ENCODE measurements at regions of chr12 and their contacts with region 1.

Region 1: DNA sequence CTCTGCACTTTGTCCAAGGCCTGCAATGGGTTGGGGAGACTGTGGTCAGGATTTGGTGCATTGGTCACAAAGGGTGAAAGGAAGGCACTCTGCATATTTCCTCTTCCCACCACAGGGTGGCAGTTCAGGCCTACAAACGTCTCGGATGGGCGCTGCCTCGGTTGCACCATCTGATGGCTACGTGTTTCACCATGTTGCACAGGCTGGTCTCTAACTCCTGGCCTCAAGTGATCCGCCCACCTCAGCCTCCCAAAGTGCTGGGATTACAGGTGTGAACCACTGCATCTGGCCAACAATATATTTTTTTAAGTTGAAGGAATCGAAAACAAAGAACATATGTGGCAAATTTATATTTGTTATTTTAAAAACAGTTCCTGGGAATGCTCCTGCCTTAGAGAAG is 35.1 kb downstream of the TMBIM6 start:
- DNase-seq: peak; percentile 84
- ATAC-seq: peak; percentile 93
- H3K4me3 Mint-ChIP-seq: no peak overlapping the region
- H3K27ac Mint-ChIP-seq: no peak overlapping the region
- H3K4me1 Mint-ChIP-seq: peaks cover 14% of the 10 kb centered on the region
- H3K27me3 Mint-ChIP-seq: peaks cover 10% of the 10 kb centered on the region

Region 2: GRCh38 chr12:49636979-49637755 is 139.2 kb before region 1 on chr12:
- CTCF ChIA-PET with region 1: interaction called, 22 read pairs
- POLR2A ChIA-PET with region 1: no interaction called
- intact Hi-C with region 1: loop called in 1 of 2 experiments (anchors 1 kb)
- DNase-seq: peak; percentile 78
- ATAC-seq: peak; percentile 97
- H3K4me3 Mint-ChIP-seq: no peak overlapping the region
- H3K27ac Mint-ChIP-seq: peak overlapping the region; percentile 33
- H3K4me1 Mint-ChIP-seq: peaks cover 14% of the 10 kb centered on the region
- H3K27me3 Mint-ChIP-seq: no peaks in the 10 kb centered on the region

Region 3: GRCh38 chr12:49740930-49741881 is 35.2 kb before region 1 on chr12 and contains the start of gene TMBIM6:
- CTCF ChIA-PET with region 1: interaction called, 36 read pairs
- POLR2A ChIA-PET with region 1: interaction called, 9 read pairs
- intact Hi-C with region 1: loop called (anchors 1 kb)
- DNase-seq: peak; percentile 99
- ATAC-seq: peak; percentile 93
- H3K4me3 Mint-ChIP-seq: peak within 1 kb of the TSS; percentile 89
- H3K27ac Mint-ChIP-seq: peak within 1 kb of the TSS; percentile 100
- H3K4me1 Mint-ChIP-seq: peaks cover 45% of the 10 kb centered on the region
- H3K27me3 Mint-ChIP-seq: no peaks in the 10 kb centered on the region
- total RNA-seq, gene TMBIM6: 378 to 450 TPM

Region 4: DNA sequence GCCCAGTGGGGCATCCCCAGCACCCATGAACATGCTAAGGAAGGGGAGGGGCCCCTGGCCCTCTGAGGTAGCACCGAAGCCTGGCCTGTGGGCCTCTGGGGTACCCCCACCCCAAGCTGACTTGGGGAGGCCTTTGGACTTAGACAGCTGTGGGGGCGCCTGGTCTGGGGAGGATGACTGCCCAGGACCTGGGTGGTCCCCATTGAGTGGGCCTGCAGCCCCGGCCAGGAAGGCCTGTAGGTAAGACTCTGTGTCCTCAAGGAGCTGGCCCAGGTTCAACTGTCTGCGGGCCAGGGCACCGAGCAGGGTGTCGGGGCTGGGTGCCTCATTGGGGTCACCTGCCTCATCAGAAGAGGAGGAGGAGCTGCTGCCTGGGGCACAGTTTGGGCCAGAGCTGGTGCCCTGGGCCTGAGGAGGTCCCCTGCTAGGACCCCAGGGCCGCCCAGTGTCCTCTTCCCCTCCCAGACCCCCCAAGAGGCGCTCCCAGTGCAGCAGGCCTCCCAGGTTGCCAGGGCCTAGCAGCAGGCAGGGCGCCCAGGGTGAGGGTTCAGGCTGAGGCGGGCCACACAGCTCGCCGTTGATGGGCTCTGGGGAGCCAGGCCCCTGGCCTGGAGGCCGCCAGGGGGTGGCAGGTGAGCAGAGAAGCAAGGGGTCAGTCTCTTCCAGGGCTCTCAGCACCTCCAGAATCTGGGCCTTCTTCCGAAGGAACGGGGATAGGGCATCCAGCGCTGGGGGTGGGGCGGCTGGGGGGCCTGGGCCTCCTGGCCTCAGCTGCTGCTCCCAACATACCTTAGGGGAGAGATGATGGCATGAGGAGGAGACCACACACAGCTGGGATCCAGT is 20.4 kb after region 1 on chr12:
- CTCF ChIA-PET with region 1: interaction called, 10 read pairs
- POLR2A ChIA-PET with region 1: no interaction called
- intact Hi-C with region 1: no loop called
- DNase-seq: no peak
- ATAC-seq: no peak
- H3K4me3 Mint-ChIP-seq: no peak overlapping the region
- H3K27ac Mint-ChIP-seq: no peak overlapping the region
- H3K4me1 Mint-ChIP-seq: no peaks in the 10 kb centered on the region
- H3K27me3 Mint-ChIP-seq: no peaks in the 10 kb centered on the region

Region 5: GRCh38 chr12:49828133-49829091 is 52.0 kb after region 1 on chr12 and contains the start of gene NCKAP5L:
- CTCF ChIA-PET with region 1: interaction called, 23 read pairs
- POLR2A ChIA-PET with region 1: no interaction called
- intact Hi-C with region 1: no loop called
- DNase-seq: peak; percentile 97
- ATAC-seq: peak; percentile 99
- H3K4me3 Mint-ChIP-seq: peak within 1 kb of the TSS; percentile 86
- H3K27ac Mint-ChIP-seq: peak within 1 kb of the TSS; percentile 90
- H3K4me1 Mint-ChIP-seq: peaks cover 27% of the 10 kb centered on the region
- H3K27me3 Mint-ChIP-seq: no peaks in the 10 kb centered on the region
- total RNA-seq, gene NCKAP5L: 4.3 to 4.5 TPM

Region 6: DNA sequence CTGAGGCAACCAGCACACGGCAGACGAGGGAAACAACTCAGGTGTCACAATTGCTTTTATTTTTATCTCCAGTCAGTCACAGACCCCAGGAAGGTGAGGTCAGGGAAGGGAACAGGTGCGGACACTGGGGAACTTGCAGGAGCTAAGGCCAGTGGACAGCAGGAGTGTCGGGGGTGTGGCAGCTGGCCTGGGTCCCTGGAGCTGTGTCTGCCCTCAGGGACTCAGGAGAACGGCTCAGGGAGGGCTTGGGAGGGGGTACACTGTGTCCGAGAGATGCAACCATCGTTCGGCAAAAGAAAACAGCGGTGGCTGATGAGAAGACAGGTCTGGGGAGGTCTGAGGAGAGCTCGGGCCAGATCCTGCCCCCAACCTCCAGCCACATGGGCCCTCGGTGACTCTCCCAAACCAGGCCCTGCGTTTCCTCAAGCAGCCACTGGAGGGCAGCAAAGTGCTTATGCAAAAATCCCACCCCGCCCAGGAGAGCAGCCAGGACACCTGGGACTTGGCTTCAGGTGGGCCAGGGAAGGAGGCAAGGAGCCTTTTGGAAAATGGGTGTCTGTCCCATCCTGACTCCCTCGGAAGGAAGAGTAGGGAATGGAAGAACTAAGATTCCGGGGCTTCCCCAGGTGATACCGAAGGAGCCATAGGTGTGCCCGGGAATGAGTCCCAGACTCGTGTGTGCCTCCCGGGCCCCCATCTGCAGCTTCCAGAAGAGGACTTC is 90.6 kb after region 1 on chr12:
- CTCF ChIA-PET with region 1: interaction called, 7 read pairs
- POLR2A ChIA-PET with region 1: no interaction called
- intact Hi-C with region 1: loop called in 1 of 2 experiments (anchors 1 kb)
- DNase-seq: peak; percentile 86
- ATAC-seq: peak; percentile 93
- H3K4me3 Mint-ChIP-seq: no peak overlapping the region
- H3K27ac Mint-ChIP-seq: no peak overlapping the region
- H3K4me1 Mint-ChIP-seq: no peaks in the 10 kb centered on the region
- H3K27me3 Mint-ChIP-seq: no peaks in the 10 kb centered on the region

Region 7: DNA sequence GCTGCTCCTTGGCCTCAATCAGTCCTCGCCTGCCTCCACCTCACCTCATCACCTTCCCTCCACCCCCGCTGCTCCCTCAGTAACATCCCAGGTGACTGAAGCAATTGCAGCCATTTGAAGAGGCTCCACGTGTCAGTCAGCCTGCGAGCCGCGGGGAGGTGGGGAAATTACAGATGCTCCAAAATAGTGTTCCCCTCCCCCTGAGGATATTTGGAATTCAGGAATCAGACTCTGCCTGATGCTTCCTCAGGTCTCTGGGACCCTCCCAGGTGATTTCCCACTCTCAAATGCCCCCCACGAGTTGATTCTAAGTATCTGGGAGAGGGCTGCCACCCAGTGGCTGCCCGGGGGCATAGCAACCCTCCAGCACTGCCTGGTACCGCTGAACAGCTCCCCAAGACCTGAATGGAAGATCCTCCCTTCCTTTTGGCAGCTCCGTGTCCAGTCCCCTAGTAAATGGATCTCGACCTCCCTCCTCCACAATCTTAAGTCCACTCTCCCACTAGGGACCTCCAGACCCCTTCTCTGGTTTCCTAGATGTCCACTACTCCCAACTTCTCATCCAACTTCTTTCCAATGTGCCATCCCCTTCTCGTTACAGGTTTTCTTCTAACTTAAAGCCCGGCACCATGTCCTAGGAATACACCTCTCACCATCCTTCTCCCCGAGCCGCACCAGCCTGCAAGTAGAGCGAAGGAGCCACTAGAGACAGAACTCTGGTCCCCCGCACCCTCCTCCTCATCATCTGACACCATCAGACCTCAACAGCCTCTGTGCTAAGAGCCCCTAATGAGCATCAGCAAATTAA is 279.6 kb after region 1 on chr12:
- CTCF ChIA-PET with region 1: interaction called, 3 read pairs
- POLR2A ChIA-PET with region 1: no interaction called
- intact Hi-C with region 1: loop called in 1 of 2 experiments (anchors 5 kb)
- DNase-seq: peak; percentile 79
- ATAC-seq: peak; percentile 43
- H3K4me3 Mint-ChIP-seq: peak overlapping the region; percentile 85
- H3K27ac Mint-ChIP-seq: peak overlapping the region; percentile 32
- H3K4me1 Mint-ChIP-seq: peaks cover 33% of the 10 kb centered on the region
- H3K27me3 Mint-ChIP-seq: peaks cover 39% of the 10 kb centered on the region